Activated T-helper 1 cell treated with anti-CD3 and anti-CD28 coated beads, Interleukin-12 subunit alpha, Interleukin-12 subunit beta, Interleukin-2, Interleukin-4 antibody, amounts not matched to agents 30 ng/mL and 10 ng/mL and 1 ng/mL, durations not matched to agents 14 hours and 24 hours and 36 hours (primary cell): ENCODE measurements at regions of chr3 and their contacts with region 1.

Region 1: DNA sequence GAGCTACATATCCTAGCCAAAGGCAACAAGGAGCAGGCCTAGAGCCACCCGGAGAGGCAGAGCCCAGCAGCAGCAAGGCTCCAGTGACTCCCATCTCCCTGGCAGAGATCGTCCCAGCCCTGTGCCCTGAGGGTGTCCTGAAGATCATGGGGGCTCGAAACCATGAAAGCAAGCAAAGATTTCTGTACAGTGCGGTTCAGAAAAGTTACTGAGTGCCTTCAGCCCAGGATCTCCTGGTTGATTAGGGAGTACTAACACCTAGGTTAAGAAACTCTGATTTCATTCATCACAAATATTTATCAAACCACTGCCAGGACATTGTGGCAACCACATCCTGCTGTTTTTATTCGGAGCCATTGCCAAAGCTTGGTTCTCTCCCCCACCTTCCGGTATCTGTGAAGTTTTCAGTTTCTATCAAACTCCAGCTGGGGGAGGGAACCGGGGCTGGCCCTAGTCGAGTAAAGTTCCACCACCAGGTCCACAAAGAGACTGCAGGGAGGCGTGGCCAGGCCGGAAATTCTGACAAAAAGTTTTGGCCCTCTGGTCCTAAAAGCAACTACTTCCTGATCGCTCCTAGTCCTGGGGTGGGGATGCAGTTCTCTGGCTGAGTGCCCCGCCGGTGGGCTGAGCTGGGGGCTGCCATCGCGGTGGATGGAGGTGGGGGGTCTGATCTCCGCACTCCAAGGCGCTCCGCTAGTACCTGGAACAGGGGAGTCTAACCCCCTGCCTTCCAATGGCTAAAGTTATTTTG is 1.2 kb downstream of the RAB43 start:
- DNase-seq: peak; percentile 90
- H3K4me3 Mint-ChIP-seq: peak overlapping the region; percentile 94
- H3K27ac Mint-ChIP-seq: peak overlapping the region; percentile 99
- H3K4me1 Mint-ChIP-seq: peaks cover 61% of the 10 kb centered on the region
- H3K27me3 Mint-ChIP-seq: no peaks in the 10 kb centered on the region

Region 2: GRCh38 chr3:128617557-128618397 is 502.7 kb before region 1 on chr3:
- intact Hi-C with region 1: loop called (anchors 5 kb)
- DNase-seq: peak; percentile 98
- H3K4me3 Mint-ChIP-seq: peak overlapping the region; percentile 98
- H3K27ac Mint-ChIP-seq: peak overlapping the region; percentile 97
- H3K4me1 Mint-ChIP-seq: peaks cover 29% of the 10 kb centered on the region
- H3K27me3 Mint-ChIP-seq: no peaks in the 10 kb centered on the region

Region 3: GRCh38 chr3:128969993-128970739 is 150.3 kb before region 1 on chr3:
- intact Hi-C with region 1: loop called (anchors 1 kb)
- DNase-seq: peak; percentile 52
- H3K4me3 Mint-ChIP-seq: no peak overlapping the region
- H3K27ac Mint-ChIP-seq: no peak overlapping the region
- H3K4me1 Mint-ChIP-seq: peaks cover 10% of the 10 kb centered on the region
- H3K27me3 Mint-ChIP-seq: peaks cover 9% of the 10 kb centered on the region

Region 4: GRCh38 chr3:129052675-129053074 is 67.8 kb before region 1 on chr3:
- intact Hi-C with region 1: loop called (anchors 1 kb)
- DNase-seq: no peak
- H3K4me3 Mint-ChIP-seq: no peak overlapping the region
- H3K27ac Mint-ChIP-seq: no peak overlapping the region
- H3K4me1 Mint-ChIP-seq: peaks cover 9% of the 10 kb centered on the region
- H3K27me3 Mint-ChIP-seq: peaks cover 14% of the 10 kb centered on the region

Region 5: DNA sequence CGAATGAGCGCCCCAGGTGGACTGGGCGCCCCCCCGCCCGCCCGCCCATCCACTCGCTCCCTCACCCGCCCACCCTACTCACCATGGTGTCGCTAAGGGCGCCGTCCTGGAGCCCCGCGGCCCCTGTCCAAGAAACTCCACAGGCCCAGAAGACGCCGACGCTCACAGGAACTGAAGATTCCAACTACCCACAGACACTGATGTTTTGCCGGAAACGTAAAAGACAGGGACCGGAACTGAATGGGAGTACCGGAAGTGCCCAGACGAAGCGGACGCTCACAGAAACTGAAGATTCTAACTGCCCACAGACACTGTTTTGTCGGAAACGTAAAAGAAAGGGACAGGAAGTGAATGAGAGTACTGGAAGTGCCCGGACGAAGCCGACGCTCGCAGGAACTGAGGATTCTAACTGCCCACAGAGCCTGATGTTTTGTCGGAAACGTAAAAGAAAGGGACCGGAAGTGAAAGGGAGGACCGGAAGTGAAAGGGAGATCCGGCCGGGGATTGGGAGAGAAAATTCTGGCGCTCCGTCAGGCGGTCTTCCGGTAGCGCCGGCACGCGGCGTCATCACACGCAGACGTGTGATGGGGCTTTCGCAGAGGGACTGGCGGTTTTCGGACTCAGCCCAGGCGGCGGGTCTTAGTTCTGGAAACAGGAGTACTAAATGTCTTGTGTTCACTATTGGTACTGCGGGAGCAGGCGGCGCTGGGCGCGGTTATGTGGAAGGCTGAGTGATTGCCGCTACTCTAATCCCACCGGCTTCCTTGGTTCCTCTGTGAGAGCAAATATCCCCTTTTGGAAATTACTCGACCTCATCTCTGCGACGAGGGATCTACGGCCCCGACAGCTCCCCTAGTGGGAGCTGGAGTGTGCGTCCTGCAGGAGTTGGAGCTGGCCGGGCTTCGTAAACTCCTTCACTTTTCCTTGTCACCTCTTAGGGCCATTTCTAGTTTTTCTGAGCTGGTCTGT is 40.7 kb after region 1 on chr3 and contains the start of gene ISY1:
- intact Hi-C with region 1: loop called (anchors 1 kb)
- DNase-seq: peak; percentile 88
- H3K4me3 Mint-ChIP-seq: peak within 1 kb of the TSS; percentile 97
- H3K27ac Mint-ChIP-seq: peak within 1 kb of the TSS; percentile 99
- H3K4me1 Mint-ChIP-seq: peaks cover 34% of the 10 kb centered on the region
- H3K27me3 Mint-ChIP-seq: no peaks in the 10 kb centered on the region
- total RNA-seq, gene ISY1: 72.3 and 75.4 TPM in 2 replicates

Region 6: GRCh38 chr3:129249276-129250065 is 129.0 kb after region 1 on chr3 and contains the start of gene COPG1:
- intact Hi-C with region 1: loop called (anchors 1 kb)
- DNase-seq: peak; percentile 88
- H3K4me3 Mint-ChIP-seq: peak within 1 kb of the TSS; percentile 98
- H3K27ac Mint-ChIP-seq: peak within 1 kb of the TSS; percentile 98
- H3K4me1 Mint-ChIP-seq: peaks cover 61% of the 10 kb centered on the region
- H3K27me3 Mint-ChIP-seq: no peaks in the 10 kb centered on the region
- total RNA-seq, gene COPG1: 157 and 160 TPM in 2 replicates

Region 7: GRCh38 chr3:129439817-129440617 is 319.6 kb after region 1 on chr3 and contains the starts of genes IFT122 and MBD4:
- intact Hi-C with region 1: loop called (anchors 2 kb)
- DNase-seq: peak; percentile 100
- H3K4me3 Mint-ChIP-seq: peak within 1 kb of the TSS; percentile 89
- H3K27ac Mint-ChIP-seq: peak within 1 kb of the TSS; percentile 98
- H3K4me1 Mint-ChIP-seq: peaks cover 63% of the 10 kb centered on the region
- H3K27me3 Mint-ChIP-seq: no peaks in the 10 kb centered on the region
- total RNA-seq, gene IFT122: 10.0 and 14.7 TPM in 2 replicates
- total RNA-seq, gene MBD4: 44.1 and 53.3 TPM in 2 replicates